ENCODE measurements at regions of chr4 and their contacts with region 1.

Region 1: DNA sequence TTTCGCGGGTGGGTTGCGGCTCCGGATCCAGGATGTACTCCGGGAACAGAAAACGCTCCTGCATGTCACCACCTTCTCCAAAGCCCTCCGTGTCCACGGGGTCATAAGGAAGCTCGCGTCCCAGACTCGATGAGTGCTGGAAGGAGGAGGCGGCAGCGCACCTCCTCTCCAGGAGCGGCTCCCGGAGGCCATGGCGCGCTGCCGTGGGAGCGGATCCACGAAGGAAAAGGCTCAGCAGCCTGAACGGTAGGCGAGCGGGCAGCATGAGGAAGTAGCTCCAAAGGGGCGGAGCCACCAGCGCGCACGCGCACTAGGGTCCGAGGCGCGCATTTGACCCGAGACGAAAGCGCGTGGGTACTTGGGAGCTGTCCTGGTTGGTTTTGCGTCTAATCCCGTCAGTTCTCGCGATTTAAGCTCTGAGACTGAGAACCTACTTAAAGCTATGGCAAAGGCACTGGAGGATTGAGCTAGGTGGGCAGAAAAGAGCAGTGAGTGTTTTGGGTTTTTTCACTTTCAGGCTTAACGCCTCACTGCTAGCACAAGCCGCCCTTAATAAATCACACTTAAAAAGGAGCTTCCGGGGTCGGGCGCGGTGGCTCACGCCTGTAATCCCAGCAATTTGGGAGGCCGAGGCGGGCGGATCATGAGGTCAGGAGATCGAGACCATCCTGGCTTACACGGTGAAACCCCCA is at the start of gene NOA1:
- DNase-seq: peak; percentile 92 to 99 (median 98)
- ATAC-seq: peak; percentile 85 to 87
- H3K4me3 Mint-ChIP-seq: peak within 1 kb of the TSS; percentile 98 to 100 (median 99)
- H3K27ac Mint-ChIP-seq: peak within 1 kb of the TSS; percentile 95 to 99 (median 97)
- H3K4me1 Mint-ChIP-seq: peaks cover 15 to 75% (median 58%) of the 10 kb centered on the region in 4 donors
- H3K27me3 Mint-ChIP-seq: no peaks in the 10 kb centered on the region
- polyA plus RNA-seq, gene NOA1: 17.8 to 24.6 (median 20.6) TPM

Region 2: DNA sequence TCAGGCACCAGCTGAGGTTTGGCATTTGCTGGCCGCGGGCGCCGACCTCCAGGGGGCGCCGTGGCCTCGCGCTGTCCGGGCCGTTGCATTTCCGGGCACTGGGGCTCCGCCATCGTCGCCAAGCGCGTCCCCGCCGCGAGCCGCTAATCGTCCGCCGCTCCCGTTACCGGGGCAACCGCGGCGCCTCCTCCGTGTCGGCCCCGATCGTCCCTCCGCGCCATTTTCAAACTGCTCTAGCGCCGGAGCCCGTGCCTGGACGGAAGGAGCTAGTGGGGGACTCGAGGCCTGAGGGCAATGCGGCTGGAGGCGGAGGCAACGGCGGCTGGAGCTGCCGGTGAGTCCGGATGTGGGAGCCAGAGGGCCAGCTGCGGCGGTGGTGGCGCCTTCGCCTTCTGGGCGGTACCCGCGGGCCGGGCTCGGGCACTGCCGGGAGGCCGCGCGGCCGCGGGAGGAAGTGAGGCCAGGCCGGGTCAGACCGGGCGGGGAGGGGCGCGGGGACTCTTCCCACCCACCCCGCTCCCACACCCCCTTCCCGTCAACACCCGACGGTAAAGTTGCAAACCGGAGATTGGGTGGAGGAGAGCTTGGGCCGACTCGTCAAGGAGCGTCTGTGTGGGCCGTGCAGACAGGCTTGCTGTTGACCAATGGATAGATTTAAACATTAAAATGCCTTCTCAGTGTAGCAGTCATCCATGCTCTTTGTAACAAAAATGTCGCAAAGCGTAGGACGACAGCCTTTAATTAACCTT is 1028.6 kb before region 1 on chr4 and contains the start of gene CEP135:
- POLR2A ChIA-PET with region 1: interaction called, 13 read pairs
- DNase-seq: peak; percentile 83 to 94 (median 90)
- ATAC-seq: peak; percentile 69 to 78
- H3K4me3 Mint-ChIP-seq: peak within 1 kb of the TSS; percentile 82 to 99 (median 92)
- H3K27ac Mint-ChIP-seq: peak within 1 kb of the TSS; percentile 91 to 98 (median 96)
- H3K4me1 Mint-ChIP-seq: peaks cover 26 to 56% (median 39%) of the 10 kb centered on the region in 4 donors
- H3K27me3 Mint-ChIP-seq: no peaks in the 10 kb centered on the region
- polyA plus RNA-seq, gene CEP135: 7.9 to 13.8 (median 8.3) TPM

Region 3: DNA sequence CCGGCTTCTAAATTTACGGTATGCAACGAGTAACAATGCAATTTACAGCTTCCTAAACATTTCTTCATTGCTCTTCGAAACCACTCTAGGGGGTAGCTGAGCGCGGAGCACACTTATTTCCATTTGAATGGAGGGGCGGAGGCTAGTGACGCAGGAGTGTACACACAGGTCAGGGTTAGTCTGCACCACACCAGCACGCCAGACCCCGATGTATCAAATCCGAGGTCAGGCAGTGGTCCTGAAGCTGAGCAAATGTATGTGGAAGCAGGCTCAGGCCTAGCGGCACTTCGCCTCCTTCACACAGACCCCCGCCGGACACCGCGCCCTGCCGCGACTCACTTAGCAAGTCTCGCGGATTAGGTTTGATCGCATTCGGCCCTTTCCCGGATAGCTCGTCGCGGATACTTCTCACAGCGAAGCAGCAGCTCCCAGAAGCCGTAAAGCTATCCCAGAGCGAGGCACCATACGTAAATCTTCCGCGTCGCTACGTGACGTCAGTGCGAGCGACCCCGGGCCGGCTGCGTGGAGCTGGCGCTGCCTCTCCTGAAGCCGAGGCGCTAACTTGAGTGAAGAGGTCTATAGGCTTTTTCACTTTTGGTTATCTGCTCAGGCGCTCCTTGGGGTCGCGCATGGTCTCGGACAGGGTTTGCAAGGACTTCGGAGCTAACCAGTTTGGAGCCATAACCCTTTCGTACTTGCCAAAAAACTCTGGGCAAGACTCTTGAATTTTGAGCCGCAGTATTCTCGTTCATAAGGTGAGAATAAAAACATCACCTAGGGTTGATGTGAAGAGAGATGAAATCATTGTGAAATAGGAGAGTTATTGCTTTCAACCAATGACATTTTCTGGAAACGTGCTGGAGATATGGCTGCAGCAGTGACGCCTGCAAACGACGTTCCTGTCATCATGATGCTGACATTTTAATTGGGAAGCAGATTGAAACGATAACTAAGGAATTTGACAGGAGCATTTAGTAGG is 590.2 kb before region 1 on chr4 and contains the start of gene AASDH:
- POLR2A ChIA-PET with region 1: interaction called, 18 read pairs
- DNase-seq: peak; percentile 87 to 99 (median 96)
- ATAC-seq: peak; percentile 87 to 90
- H3K4me3 Mint-ChIP-seq: peak within 1 kb of the TSS; percentile 87 to 96 (median 93)
- H3K27ac Mint-ChIP-seq: peak within 1 kb of the TSS; percentile 97 to 100 (median 98)
- H3K4me1 Mint-ChIP-seq: peaks cover 29 to 49% (median 45%) of the 10 kb centered on the region in 4 donors
- H3K27me3 Mint-ChIP-seq: no peaks in the 10 kb centered on the region
- polyA plus RNA-seq, gene AASDH: 20.8 to 31.4 (median 22.5) TPM

Region 4: DNA sequence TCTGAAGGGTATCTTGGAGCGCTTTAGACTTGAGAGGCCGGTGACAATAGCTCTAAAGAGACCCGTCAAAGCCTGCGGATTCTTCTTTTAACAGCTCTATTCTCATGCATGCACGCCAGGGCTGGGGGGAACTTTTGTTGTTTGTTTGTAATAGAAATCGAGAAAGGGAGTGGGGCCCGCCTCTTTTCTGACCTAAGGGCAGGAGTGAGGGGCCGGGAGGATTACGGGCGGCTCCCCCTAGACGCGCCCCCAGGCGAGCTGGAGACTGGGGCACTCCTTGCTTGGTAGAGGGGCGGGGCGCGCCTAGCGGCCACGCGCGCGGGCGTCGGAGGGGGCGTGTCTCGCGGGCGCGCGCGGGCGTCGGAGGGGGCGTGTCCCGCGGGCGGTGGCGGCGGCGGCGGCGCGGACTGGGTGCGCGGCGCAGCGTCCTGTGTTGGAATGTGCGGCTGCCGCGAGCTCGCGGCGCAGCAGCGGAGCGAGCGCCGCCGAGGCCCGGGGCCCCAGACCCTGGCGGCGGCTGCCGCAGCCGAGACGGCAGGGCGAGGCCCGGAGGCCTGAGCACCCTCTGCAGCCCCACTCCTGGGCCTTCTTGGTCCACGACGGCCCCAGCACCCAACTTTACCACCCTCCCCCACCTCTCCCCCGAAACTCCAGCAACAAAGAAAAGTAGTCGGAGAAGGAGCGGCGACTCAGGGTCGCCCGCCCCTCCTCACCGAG is 69.8 kb before region 1 on chr4 and contains the start of gene REST:
- POLR2A ChIA-PET with region 1: interaction called, 154 read pairs
- DNase-seq: peak; percentile 73 to 92 (median 86)
- ATAC-seq: peak; percentile 64 to 70
- H3K4me3 Mint-ChIP-seq: peak within 1 kb of the TSS; percentile 85 to 98 (median 96)
- H3K27ac Mint-ChIP-seq: peak within 1 kb of the TSS; percentile 86 to 96 (median 92)
- H3K4me1 Mint-ChIP-seq: peaks cover 16 to 50% (median 43%) of the 10 kb centered on the region in 4 donors
- H3K27me3 Mint-ChIP-seq: no peaks in the 10 kb centered on the region
- polyA plus RNA-seq, gene REST: 139 to 155 (median 149) TPM

Region 5: GRCh38 chr4:56959100-56959499 is 18.4 kb before region 1 on chr4:
- POLR2A ChIA-PET with region 1: interaction called, 17 read pairs
- DNase-seq: no peak
- ATAC-seq: no peak
- H3K4me3 Mint-ChIP-seq: no peak overlapping the region
- H3K27ac Mint-ChIP-seq: no peak overlapping the region
- H3K4me1 Mint-ChIP-seq: peaks cover 0 to 2% (median 0%) of the 10 kb centered on the region in 4 donors
- H3K27me3 Mint-ChIP-seq: no peaks in the 10 kb centered on the region